Breast epithelium (tissue), 4 donors: ENCODE measurements at regions of chr2 and their contacts with region 1.

Region 1: GRCh38 chr2:152846697-152847470 is 128.5 kb downstream of the ARL6IP6 start:
- DNase-seq: no peak
- H3K4me3 ChIP-seq: no peak overlapping the region
- H3K27ac ChIP-seq: no peak overlapping the region
- H3K4me1 ChIP-seq: no peaks in the 10 kb centered on the region
- H3K27me3 ChIP-seq: no peaks in the 10 kb centered on the region
- CTCF ChIP-seq: no peak
- POLR2A ChIP-seq: no peak

Region 2: DNA sequence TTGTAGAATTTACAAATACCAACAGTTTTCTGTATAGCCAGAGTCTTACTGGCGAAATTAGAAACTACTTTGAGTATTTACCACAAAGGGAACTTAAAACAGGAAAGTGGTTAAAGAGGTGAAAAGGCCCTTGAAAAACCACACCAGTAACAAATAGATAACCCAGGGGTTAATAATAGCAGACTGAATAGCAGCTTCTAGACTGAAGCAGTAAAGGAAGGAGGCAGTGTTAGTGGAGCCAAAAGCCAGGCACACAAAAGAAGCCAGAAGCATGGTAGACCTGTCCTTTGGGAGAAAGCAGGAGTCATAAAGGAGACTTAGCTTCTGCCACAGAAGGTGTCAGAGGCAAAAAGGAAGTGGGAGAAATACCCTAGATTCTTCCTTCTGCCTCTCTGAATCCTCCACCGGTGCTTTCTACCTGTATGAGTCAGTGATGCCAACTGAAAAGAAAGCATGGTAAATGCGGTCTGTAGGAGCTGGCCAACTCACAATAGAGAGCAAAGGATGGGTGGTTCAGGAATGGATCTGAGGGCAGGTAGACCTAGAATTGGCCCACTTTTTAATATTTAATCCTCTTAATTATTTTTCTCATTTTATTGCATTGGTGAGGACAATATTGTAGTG is 31.1 kb before region 1 on chr2:
- intact Hi-C with region 1: no loop called
- DNase-seq: no peak
- H3K4me3 ChIP-seq: no peak overlapping the region
- H3K27ac ChIP-seq: no peak overlapping the region
- H3K4me1 ChIP-seq: no peaks in the 10 kb centered on the region
- H3K27me3 ChIP-seq: no peaks in the 10 kb centered on the region
- CTCF ChIP-seq: no peak
- POLR2A ChIP-seq: no peak

Region 3: GRCh38 chr2:154368153-154368552 is 1521.3 kb after region 1 on chr2:
- intact Hi-C with region 1: loop called (anchors 5 kb)
- DNase-seq: no peak
- H3K4me3 ChIP-seq: no peak overlapping the region
- H3K27ac ChIP-seq: no peak overlapping the region
- H3K4me1 ChIP-seq: no peaks in the 10 kb centered on the region
- H3K27me3 ChIP-seq: no peaks in the 10 kb centered on the region
- CTCF ChIP-seq: no peak
- POLR2A ChIP-seq: no peak

Region 4: GRCh38 chr2:154495455-154495868 is 1648.6 kb after region 1 on chr2:
- intact Hi-C with region 1: no loop called
- DNase-seq: no peak
- H3K4me3 ChIP-seq: no peak overlapping the region
- H3K27ac ChIP-seq: no peak overlapping the region
- H3K4me1 ChIP-seq: no peaks in the 10 kb centered on the region
- H3K27me3 ChIP-seq: no peaks in the 10 kb centered on the region
- CTCF ChIP-seq: no peak
- POLR2A ChIP-seq: no peak